AG04449 (cell line): ENCODE measurements at regions of chr14 and their contacts with region 1.

Region 1: DNA sequence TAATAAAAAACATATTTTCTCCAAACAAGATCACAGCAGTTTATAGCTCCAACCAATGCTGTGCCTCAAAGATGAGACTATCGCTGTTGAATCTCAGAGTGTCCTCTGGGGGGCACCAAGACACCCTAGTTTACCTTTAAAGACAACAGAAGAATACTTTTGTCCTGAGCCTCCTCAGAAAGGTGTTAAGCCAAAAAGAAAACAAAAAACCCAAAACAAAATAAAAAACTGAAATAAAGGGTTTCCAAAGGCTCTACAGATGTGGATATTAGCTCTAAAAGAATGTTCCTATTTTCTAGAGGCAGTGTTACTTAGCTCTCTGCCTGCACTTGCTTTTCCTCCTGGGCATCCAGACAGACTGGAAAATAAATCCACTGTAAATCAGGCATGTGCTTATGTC is 86.9 kb upstream of the TTC7B start:
- DNase-seq: peak; percentile 7
- H3K4me3 ChIP-seq: no peak overlapping the region
- CTCF ChIP-seq: peak; percentile 58

Region 2: GRCh38 chr14:90726656-90727055 is 176.4 kb before region 1 on chr14:
- CTCF ChIA-PET with region 1: no interaction called
- POLR2A ChIA-PET with region 1: no interaction called
- DNase-seq: peak; percentile 12
- H3K4me3 ChIP-seq: no peak overlapping the region
- CTCF ChIP-seq: peak; percentile 17

Region 3: DNA sequence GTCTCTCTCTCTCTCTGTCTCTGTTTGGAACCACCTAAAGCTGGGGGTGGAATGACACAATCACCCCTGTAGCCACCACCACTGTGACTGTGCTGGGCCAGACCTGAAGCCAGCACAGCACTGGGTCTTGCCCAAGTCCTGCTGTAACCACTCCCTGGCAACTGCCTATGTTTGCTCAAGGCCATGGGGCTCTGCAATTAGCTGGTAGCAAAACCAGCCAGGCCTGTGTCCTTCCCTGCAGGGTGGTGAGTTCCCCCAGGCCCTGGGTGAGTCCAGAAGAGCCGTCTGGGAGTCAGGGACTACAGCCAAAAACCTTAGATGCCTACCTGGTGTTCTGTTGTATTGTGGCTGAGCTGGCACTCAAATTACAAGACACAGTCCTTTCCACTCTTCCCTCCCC is 261.6 kb after region 1 on chr14:
- CTCF ChIA-PET with region 1: interaction called, 432 read pairs
- POLR2A ChIA-PET with region 1: no interaction called
- DNase-seq: no peak
- H3K4me3 ChIP-seq: no peak overlapping the region
- CTCF ChIP-seq: no peak